PC-3 (cell line): ENCODE measurements at regions of chr6 and their contacts with region 1.

Region 1: GRCh38 chr6:4135665-4136353 is 434 bp upstream of the ECI2 start:
- DNase-seq: peak; percentile 88
- ATAC-seq: peak; percentile 76
- H3K4me3 ChIP-seq: peak overlapping the region; percentile 93
- H3K27ac ChIP-seq: peak overlapping the region; percentile 51
- H3K4me1 ChIP-seq: peaks cover 22% of the 10 kb centered on the region
- H3K27me3 ChIP-seq: no peaks in the 10 kb centered on the region
- CTCF ChIP-seq: no peak

Region 2: GRCh38 chr6:4018172-4018905 is 117.5 kb before region 1 on chr6:
- CTCF ChIA-PET with region 1: no interaction called
- POLR2A ChIA-PET with region 1: interaction called, 37 read pairs
- intact Hi-C with region 1: no loop called
- DNase-seq: peak; percentile 98
- ATAC-seq: peak; percentile 66
- H3K4me3 ChIP-seq: peak overlapping the region; percentile 93
- H3K27ac ChIP-seq: peak overlapping the region; percentile 91
- H3K4me1 ChIP-seq: peaks cover 35% of the 10 kb centered on the region
- H3K27me3 ChIP-seq: no peaks in the 10 kb centered on the region
- CTCF ChIP-seq: peak; percentile 53

Region 3: GRCh38 chr6:4055420-4056041 is 80.3 kb before region 1 on chr6:
- CTCF ChIA-PET with region 1: interaction called, 5 read pairs
- POLR2A ChIA-PET with region 1: no interaction called
- intact Hi-C with region 1: loop called (anchors 1 kb)
- DNase-seq: peak; percentile 89
- ATAC-seq: peak; percentile 57
- H3K4me3 ChIP-seq: no peak overlapping the region
- H3K27ac ChIP-seq: peak overlapping the region; percentile 28
- H3K4me1 ChIP-seq: peaks cover 68% of the 10 kb centered on the region
- H3K27me3 ChIP-seq: no peaks in the 10 kb centered on the region
- CTCF ChIP-seq: peak; percentile 83

Region 4: GRCh38 chr6:4102687-4103244 is 33.0 kb before region 1 on chr6:
- CTCF ChIA-PET with region 1: no interaction called
- POLR2A ChIA-PET with region 1: interaction called, 10 read pairs
- intact Hi-C with region 1: no loop called
- DNase-seq: no peak
- ATAC-seq: no peak
- H3K4me3 ChIP-seq: no peak overlapping the region
- H3K27ac ChIP-seq: no peak overlapping the region
- H3K4me1 ChIP-seq: peaks cover 7% of the 10 kb centered on the region
- H3K27me3 ChIP-seq: no peaks in the 10 kb centered on the region
- CTCF ChIP-seq: no peak

Region 5: GRCh38 chr6:4155848-4156466 is 20.1 kb after region 1 on chr6:
- CTCF ChIA-PET with region 1: interaction called, 5 read pairs
- POLR2A ChIA-PET with region 1: interaction called, 34 read pairs
- intact Hi-C with region 1: loop called (anchors 2 kb)
- DNase-seq: peak; percentile 93
- ATAC-seq: peak; percentile 97
- H3K4me3 ChIP-seq: no peak overlapping the region
- H3K27ac ChIP-seq: no peak overlapping the region
- H3K4me1 ChIP-seq: peaks cover 5% of the 10 kb centered on the region
- H3K27me3 ChIP-seq: no peaks in the 10 kb centered on the region
- CTCF ChIP-seq: peak; percentile 89

Region 6: DNA sequence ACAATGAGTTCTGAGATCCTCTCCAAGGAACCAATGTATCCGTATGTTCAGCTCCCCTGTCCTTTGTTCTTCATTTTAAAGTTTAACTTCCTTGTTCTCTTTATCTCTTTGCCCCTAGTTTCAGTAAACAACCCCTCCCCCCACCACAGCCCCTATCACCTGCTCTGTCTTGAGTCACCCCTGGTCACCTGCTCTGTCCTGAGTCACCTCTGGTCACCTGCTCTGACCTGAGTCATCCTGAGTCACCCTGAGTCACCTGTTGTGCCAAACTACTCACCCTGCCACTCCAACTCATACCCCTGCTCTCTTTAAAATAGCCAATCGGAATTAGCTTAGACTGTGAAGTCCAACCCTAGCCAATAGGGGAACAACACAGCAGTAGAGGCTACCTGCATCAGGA is 351.7 kb after region 1 on chr6:
- CTCF ChIA-PET with region 1: no interaction called
- POLR2A ChIA-PET with region 1: interaction called, 17 read pairs
- intact Hi-C with region 1: no loop called
- DNase-seq: peak; percentile 92
- ATAC-seq: peak; percentile 89
- H3K4me3 ChIP-seq: no peak overlapping the region
- H3K27ac ChIP-seq: peak overlapping the region; percentile 48
- H3K4me1 ChIP-seq: no peaks in the 10 kb centered on the region
- H3K27me3 ChIP-seq: no peaks in the 10 kb centered on the region
- CTCF ChIP-seq: no peak